ENCODE measurements at regions of chr12 and their contacts with region 1.

Region 1: GRCh38 chr12:3885277-3886094 is 12.3 kb upstream of the PARP11 start:
- DNase-seq: peak; percentile 65
- ATAC-seq: peak; percentile 43
- H3K4me3 Mint-ChIP-seq: no peak overlapping the region
- H3K27ac Mint-ChIP-seq: peak overlapping the region; percentile 8
- H3K4me1 Mint-ChIP-seq: peaks cover 12% of the 10 kb centered on the region
- H3K27me3 Mint-ChIP-seq: peaks cover 7% of the 10 kb centered on the region

Region 2: DNA sequence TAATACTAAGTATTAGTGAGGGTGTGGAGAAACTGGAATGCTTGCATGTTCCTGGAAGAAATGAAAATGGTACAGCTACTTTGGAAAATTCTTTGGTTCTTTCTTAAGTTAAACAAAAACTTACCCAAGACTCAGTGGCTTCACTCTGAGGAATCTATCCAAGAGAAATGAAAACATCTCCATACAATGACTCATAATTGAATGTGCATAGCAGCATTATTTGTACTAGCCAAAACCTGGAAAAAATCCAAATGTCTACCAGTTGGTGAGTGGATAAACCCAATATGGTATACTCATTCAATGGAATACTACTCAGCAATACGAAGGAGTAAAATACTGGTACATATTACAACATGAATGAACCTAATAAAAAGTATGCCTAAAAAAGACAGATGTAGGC is 114.6 kb before region 1 on chr12:
- CTCF ChIA-PET with region 1: no interaction called
- POLR2A ChIA-PET with region 1: no interaction called
- DNase-seq: no peak
- ATAC-seq: no peak
- H3K4me3 Mint-ChIP-seq: no peak overlapping the region
- H3K27ac Mint-ChIP-seq: no peak overlapping the region
- H3K4me1 Mint-ChIP-seq: peaks cover 9% of the 10 kb centered on the region
- H3K27me3 Mint-ChIP-seq: no peaks in the 10 kb centered on the region

Region 3: DNA sequence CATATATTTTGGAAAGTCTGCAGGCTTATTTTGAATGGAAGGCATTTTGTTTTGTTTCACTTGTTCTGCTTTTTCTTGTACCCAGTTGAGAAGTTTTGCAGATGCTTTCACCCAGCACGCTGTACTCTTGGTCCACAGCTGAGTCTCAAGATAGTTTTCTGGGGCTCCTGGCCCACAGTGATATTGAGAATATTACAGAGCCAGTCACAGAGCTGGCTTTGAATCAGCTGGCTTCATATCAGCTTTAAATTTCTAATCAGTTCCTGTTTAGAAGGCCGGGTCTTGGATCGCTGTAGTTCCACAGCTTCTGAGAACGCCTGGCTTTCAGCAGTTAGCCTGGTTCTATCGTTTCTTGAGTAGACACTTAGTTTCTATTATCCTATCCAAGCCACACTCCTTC is 20.2 kb after region 1 on chr12:
- CTCF ChIA-PET with region 1: interaction called, 24 read pairs
- POLR2A ChIA-PET with region 1: no interaction called
- DNase-seq: no peak
- ATAC-seq: peak; percentile 40
- H3K4me3 Mint-ChIP-seq: peak overlapping the region; percentile 75
- H3K27ac Mint-ChIP-seq: peak overlapping the region; percentile 83
- H3K4me1 Mint-ChIP-seq: peaks cover 31% of the 10 kb centered on the region
- H3K27me3 Mint-ChIP-seq: no peaks in the 10 kb centered on the region

Region 4: GRCh38 chr12:3973978-3974644 is 88.6 kb after region 1 on chr12:
- CTCF ChIA-PET with region 1: interaction called, 79 read pairs
- POLR2A ChIA-PET with region 1: no interaction called
- DNase-seq: no peak
- ATAC-seq: peak; percentile 42
- H3K4me3 Mint-ChIP-seq: peak overlapping the region; percentile 20
- H3K27ac Mint-ChIP-seq: peak overlapping the region; percentile 81
- H3K4me1 Mint-ChIP-seq: peaks cover 60% of the 10 kb centered on the region
- H3K27me3 Mint-ChIP-seq: peaks cover under 1% of the 10 kb centered on the region

Region 5: DNA sequence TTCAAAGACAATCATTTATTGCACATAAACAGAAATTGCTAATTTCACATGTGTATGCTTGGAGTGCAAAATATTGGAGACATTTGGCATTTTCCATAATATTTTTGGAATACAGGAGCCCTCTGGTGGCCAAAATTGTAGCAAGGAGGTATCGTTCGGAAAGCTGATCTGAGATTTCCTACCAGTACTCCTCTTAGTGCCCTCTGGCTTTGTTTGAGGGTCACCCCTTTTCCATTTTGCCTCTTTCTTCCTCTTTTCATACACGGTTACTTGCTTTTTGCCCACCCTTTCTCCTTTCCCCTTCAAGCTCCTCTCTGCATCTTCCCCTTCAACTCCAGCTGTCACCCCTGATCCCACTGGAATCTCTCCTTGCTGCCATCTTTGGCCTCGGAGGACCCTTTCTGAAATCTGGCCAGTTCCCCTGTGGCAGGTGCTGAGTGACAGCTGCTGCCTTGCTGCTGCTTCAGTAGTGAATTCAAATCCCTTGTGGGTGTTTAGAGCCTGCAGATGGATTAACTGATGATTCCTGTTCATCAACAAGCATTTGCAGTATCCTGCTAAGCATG is 152.3 kb after region 1 on chr12:
- CTCF ChIA-PET with region 1: interaction called, 47 read pairs
- POLR2A ChIA-PET with region 1: no interaction called
- DNase-seq: no peak
- ATAC-seq: no peak
- H3K4me3 Mint-ChIP-seq: no peak overlapping the region
- H3K27ac Mint-ChIP-seq: no peak overlapping the region
- H3K4me1 Mint-ChIP-seq: peaks cover 9% of the 10 kb centered on the region
- H3K27me3 Mint-ChIP-seq: peaks cover 21% of the 10 kb centered on the region

Region 6: DNA sequence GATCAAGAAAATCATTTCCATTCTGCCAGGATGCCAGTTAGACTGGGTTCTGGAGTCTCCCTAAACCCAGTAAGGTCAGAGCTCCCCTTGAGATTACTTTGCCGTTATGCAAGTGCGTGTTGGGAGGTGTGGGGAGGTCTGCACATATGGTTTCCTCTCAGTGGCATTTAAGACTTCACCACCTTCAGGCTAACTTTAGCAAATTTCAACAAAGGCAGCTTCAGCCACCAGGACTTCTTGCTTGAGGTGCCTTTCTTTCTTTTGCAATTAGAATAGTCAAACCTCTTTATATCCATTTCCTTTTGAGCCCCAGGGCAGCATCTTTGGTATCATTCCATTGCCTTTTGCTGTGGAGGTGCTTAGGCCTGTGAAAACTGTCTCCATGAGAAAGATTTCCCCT is 270.8 kb after region 1 on chr12:
- CTCF ChIA-PET with region 1: interaction called, 19 read pairs
- POLR2A ChIA-PET with region 1: interaction called, 3 read pairs
- DNase-seq: no peak
- ATAC-seq: no peak
- H3K4me3 Mint-ChIP-seq: no peak overlapping the region
- H3K27ac Mint-ChIP-seq: peak overlapping the region; percentile 84
- H3K4me1 Mint-ChIP-seq: peaks cover 92% of the 10 kb centered on the region
- H3K27me3 Mint-ChIP-seq: no peaks in the 10 kb centered on the region